Posterior cingulate gyrus (tissue), 11 donors: ENCODE measurements at regions of chr2 and their contacts with region 1.

Region 1: GRCh38 chr2:39728941-39729351 is 50.1 kb downstream of the THUMPD2 start:
- DNase-seq: peak in 6 of 10 donors; percentile 34 to 86 (median 46)

Region 2: GRCh38 chr2:39513641-39514094 is 215.3 kb before region 1 on chr2:
- intact Hi-C with region 1: loop called (anchors 10 kb)
- DNase-seq: peak in 4 of 10 donors; percentile 29 to 57 (median 44)

Region 3: DNA sequence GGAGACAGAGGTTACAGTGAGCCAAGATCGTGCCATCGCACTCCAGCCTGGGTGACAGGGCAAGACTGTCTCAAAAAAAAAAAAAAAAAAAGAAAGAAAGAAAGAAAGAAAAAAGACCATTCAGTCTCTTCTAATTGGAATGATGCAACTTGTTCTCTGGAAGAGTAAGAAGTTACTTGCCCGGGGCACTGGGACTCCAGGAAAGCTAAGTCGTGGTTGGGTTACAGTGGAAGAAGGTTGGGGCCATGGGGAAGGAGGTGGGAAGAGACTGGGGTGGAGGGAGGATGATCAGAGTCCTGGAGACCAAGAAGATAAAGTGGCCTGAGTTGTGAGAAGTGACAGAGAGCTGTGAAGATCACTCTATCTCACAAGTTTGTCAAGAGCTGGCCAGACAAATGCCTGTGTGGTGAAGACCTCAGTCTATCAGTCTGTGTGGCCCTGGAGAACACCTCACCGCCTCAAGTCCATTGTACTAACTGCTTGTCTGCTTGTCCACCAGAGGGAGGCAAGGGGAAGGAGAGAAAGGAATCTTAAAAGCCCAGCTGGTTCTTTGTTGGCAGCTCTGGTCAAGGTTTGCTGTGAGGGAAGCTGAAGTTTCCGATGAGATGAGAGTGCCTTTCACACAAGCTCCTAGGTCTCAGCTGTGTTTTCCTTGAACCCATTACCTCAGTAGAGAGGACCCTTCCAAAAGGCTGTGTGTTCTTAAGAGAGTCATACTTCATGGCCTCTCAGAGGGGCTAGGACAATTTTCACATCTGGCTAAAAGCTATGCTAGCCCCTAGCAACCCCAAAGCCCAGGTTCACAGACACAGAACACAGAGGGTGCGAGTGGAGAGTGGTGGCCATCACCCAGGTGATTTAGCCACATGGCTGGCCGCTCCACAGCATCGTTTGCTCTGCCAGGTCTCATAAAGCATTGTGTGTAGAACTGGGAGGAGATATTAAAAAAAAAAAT is 135.2 kb before region 1 on chr2:
- intact Hi-C with region 1: loop called (anchors 10 kb)
- DNase-seq: peak in 2 of 10 donors; percentile 25 to 44